Cardiac septum (tissue), 1 donor: ENCODE measurements at regions of chr12 and their contacts with region 1.

Region 1: DNA sequence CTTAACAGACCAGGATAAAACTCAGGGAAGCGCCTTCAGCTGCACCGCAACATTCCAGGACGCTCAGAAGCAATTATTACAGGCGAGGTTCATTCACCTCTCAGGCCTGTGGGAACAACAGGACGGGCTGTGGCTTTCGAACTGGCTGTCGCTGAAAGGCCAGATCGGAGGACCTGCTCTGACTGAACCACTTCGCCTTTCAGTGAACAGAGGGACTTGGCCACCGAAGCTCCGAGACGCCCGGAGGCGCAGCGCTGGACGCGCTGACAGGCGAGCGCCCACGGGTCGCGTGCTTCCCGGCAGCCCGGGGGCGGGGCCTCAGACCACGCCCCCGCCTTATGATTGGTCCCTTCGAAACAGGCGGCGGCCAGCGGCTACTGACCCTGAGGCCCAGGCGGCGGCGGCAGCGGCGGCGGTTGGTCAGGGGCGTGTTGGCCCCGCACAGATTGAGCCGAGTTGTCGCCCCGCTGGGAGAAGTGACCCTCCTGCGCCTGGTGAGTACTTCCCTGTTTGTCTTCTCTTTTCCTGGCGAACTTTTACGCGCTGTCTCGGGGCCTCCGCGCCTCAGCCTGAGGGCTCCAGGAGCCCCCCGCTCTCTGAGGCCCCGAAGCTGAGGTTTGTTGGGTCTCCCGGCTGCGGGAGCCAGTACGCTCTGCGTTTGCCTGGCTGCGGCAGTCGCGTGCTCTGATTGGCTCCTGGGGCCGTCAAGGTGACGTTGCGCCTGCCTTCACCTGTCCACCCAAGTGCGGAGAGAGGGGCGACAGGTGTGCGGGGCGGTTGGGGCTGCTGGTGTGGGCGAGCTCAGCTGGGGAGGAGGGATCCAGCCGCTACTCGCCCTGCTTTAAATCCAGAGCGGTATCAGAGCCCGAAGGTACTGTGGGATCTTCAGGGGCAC is at the start of gene GAS2L3:
- DNase-seq: peak; percentile 92
- total RNA-seq, gene GAS2L3: 2.8 TPM

Region 2: DNA sequence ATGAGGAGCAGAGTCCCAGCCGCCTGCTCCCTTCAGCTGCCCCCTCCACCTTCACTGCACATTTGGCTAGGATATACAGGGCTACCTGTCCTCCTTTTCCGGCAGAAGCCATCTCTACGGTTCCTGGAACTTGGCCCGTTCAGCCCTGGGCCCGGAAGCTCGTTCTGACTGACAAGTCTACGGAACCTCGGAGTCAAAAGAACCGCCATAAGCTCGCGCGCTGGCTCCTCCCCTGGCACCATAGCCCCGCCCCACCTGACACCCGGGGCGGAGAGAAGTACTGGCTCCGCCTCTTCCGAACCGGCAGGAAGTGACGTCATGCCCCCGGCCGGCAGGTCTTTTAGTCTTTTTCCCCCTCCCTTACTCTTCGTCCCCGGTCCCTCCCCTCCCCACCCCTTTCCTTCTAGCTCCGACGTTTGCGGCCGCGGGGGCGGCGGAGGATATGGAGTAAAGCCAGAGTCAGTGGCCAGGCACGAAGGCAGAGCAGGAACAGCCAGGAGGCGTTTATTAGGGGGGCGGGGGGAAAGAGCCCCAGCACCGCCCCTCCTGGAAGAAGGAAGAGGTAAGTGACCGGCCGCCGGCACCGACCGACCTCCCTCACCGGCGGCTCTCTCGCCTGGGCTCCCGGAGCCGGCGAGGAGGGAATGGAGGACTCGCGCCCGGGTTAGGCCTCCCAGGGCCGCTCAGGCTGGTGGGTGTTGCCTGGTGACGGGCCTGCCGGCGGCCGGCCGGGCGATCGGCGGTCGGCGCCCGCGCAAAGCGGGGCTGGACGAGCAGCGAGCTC is 306.5 kb before region 1 on chr12 and contains the starts of genes DEPDC4 and SCYL2:
- intact Hi-C with region 1: loop called (anchors 10 kb)
- DNase-seq: peak; percentile 99
- total RNA-seq, gene DEPDC4: 0.62 TPM
- total RNA-seq, gene SCYL2: 39.3 TPM